ENCODE measurements at regions of chr2 and their contacts with region 1.

Region 1: DNA sequence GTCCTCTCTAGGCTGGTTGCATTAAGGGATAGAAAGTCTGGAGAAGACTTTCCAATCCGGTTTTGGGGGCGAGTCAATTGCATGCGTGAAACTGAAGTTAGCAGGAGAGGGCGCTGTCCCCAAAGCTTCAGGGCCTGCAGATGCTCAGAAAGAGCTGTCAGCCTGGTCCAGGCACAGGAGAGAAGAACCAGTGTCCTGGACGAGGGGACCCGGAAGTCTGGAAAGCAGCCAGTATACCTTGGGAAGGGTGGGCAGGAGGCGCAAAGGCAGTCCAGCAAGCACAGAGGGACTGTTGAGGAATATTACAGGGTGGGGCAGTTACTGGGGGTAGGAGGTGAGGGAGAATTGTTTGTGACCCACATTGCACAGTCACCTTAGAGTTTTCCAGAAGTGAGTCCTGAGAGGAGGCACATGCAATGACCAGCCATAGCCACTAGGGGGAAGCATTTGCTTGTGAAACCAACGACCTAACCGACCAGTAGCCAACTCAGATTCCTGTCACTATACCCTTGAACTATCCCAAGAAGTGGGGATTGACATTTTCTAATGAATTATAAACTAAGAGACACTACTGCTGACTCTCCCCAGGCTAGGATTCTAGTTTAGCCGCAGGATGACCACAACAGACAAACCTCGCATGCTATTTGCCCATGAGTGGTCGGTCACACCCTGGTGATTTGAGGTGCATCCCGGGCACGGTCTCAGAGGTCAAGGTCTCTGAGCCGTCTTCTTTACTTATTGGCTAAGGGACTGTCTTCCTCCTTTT is 172.8 kb downstream of the RDH14 start:
- DNase-seq: peak; percentile 65
- H3K4me3 ChIP-seq: no peak overlapping the region; a peak in 1 of 4 replicates
- H3K27ac ChIP-seq: no peak overlapping the region
- H3K4me1 ChIP-seq: peaks cover 0 to 2% of the 10 kb centered on the region in 2 experiments; a peak in 2 of 4 replicates
- H3K27me3 ChIP-seq: peaks cover 2% of the 10 kb centered on the region; the same call in 1 of the 2 replicates
- CTCF ChIP-seq: peak; percentile 99
- EP300 ChIP-seq: no peak
- RAD21 ChIP-seq: peak; percentile 97

Region 2: GRCh38 chr2:18404708-18405107 is 17.1 kb after region 1 on chr2:
- CTCF ChIA-PET with region 1: interaction called, 18 read pairs
- POLR2A ChIA-PET with region 1: no interaction called
- DNase-seq: peak; percentile 25
- H3K4me3 ChIP-seq: no peak overlapping the region
- H3K27ac ChIP-seq: no peak overlapping the region
- H3K4me1 ChIP-seq: no peaks in the 10 kb centered on the region; a peak in 1 of 4 replicates
- H3K27me3 ChIP-seq: no peaks in the 10 kb centered on the region
- CTCF ChIP-seq: peak; percentile 64
- EP300 ChIP-seq: no peak
- RAD21 ChIP-seq: peak; percentile 44

Region 3: DNA sequence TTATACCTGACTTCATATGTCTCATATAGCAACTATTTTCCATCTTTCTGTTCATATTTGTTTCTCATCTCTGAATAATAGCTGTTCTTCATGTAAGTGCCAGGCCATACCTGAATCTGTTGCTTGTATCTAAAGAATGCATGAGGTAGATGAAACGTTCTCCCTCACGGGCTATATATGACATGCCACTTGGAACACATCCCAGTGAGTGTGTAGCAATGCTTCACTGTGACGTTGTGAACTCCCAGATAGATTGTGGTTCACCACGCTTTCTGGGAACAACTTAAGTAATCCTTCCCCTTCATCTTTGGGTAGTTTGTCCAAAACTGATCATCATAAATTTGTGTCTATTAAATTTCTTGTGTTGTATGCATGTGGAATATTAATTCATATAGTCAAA is 112.7 kb after region 1 on chr2:
- CTCF ChIA-PET with region 1: interaction called, 10 read pairs
- POLR2A ChIA-PET with region 1: no interaction called
- DNase-seq: no peak
- H3K4me3 ChIP-seq: no peak overlapping the region
- H3K27ac ChIP-seq: no peak overlapping the region
- H3K4me1 ChIP-seq: no peaks in the 10 kb centered on the region; a peak in 1 of 4 replicates
- H3K27me3 ChIP-seq: no peaks in the 10 kb centered on the region
- CTCF ChIP-seq: no peak
- EP300 ChIP-seq: no peak
- RAD21 ChIP-seq: no peak

Region 4: DNA sequence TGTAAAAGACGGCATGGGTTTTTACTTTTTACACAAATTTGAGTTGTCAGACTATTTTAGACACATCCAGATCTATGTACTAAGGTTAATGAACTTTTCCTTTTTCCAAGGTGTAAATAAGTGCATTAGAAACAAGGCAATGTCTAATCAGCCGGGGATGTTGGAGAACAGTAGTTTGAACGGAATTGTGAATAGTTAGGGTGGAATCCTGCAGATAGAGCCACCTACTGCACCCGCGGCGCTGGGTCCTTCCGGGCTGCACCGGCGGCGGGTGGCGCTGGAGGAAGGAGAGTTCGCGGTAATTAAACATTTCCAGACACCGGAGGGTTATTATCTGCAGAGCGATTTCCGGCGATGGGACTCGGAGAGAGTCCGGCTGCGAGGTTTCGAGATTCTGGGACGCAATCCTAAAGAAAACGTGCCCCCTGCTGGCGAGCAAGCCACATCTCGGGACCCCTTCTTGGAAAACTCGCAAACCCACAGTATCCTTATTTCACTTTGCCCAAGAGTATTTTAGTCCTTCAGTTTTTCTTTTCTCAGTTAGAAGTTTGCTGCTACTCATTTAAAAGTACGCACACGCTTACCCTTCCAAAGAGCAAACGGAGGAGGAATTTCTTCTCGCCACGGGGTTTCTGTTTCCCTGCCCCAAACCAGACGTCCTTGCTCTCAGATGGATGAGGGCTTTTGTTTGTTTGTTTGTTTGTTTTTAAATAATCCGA is 975.3 kb after region 1 on chr2:
- CTCF ChIA-PET with region 1: interaction called, 14 read pairs
- POLR2A ChIA-PET with region 1: no interaction called
- DNase-seq: peak; percentile 91
- H3K4me3 ChIP-seq: peak overlapping the region; percentile 66 to 76
- H3K27ac ChIP-seq: peak overlapping the region; percentile 52 to 59; a peak in 3 of 4 replicates
- H3K4me1 ChIP-seq: peaks cover 5 to 19% of the 10 kb centered on the region in 2 experiments; a peak in 1 of 4 replicates
- H3K27me3 ChIP-seq: no peaks in the 10 kb centered on the region
- CTCF ChIP-seq: peak; percentile 98
- EP300 ChIP-seq: peak; percentile 25 to 44; a peak in 1 of 4 replicates
- RAD21 ChIP-seq: peak; percentile 94